ENCODE measurements at regions of chr11 and their contacts with region 1.

Region 1: GRCh38 chr11:706957-707816 is 1.2 kb downstream of the EPS8L2 start:
- DNase-seq: no peak
- H3K4me3 ChIP-seq: peak overlapping the region; percentile 38 to 64 (median 49)
- H3K27ac ChIP-seq: no peak overlapping the region
- H3K4me1 ChIP-seq: peaks cover 0 to 48% (median 33%) of the 10 kb centered on the region in 4 experiments; a peak in 6 of 7 replicates
- H3K27me3 ChIP-seq: no peaks in the 10 kb centered on the region
- CTCF ChIP-seq: no peak; a peak in 1 of 4 replicates
- EP300 ChIP-seq: no peak
- POLR2A ChIP-seq: no peak
- RAD21 ChIP-seq: no peak

Region 2: DNA sequence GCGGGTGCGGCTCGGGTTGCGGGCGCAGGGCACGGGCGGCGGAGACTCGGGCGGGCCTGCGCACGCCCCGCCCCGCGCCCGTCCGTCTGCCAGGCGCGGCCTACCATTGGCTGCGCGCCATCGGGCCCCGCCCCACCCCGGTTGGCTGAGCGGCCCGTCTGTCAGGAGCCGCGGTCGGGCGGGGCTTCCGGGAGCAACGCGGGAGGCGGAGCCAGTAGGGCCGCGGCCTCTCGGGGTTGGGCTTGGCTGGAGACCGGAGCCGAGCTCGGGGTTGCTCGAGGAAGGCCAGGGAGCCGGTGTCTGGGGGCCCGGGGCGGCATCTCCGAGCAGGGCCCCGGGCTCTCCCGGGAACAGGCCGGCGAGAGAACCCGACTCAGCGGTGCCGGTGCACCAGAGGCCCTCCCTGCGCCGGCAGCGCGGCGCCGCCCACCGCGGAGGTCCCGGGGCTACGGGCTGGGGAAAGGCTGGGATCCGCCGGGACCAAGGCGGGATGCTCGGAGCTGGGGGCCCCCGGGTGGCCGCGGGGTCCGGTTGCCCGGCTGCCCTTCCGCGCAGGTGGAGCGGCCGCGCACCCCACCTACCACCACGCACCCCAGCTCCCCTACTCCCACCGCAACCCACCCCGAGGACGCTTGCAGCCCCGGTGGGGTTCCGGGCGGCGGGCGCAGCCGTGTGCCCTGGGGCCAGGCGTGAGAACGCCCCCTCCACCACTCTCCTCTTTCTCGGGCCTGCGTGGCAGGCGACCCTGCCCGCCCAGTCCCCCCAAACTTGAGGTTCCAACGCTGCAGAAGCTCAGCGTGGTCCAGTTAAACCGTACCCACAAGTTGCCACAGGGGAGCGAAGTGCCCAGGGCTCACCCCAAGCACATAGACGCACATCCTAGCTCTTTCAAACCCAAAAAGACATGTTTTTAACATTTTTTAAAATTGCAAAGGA is 171.4 kb before region 1 on chr11 and contains the start of gene HRAS:
- CTCF ChIA-PET with region 1: no interaction called
- POLR2A ChIA-PET with region 1: no interaction called
- DNase-seq: peak; percentile 70 to 94
- H3K4me3 ChIP-seq: peak within 1 kb of the TSS; percentile 67 to 81 (median 74)
- H3K27ac ChIP-seq: 0 out of 2 replicates have a peak within 1 kb of the TSS, but pooled peaks have one; percentile 30
- H3K4me1 ChIP-seq: peaks cover 0 to 19% (median 10%) of the 10 kb centered on the region in 4 experiments; a peak in 5 of 7 replicates
- H3K27me3 ChIP-seq: peaks cover 0 to 16% (median 6%) of the 10 kb centered on the region in 4 experiments; a peak in 5 of 7 replicates
- CTCF ChIP-seq: peak in 1 of 3 experiments; percentile 20; a peak in 1 of 4 replicates
- EP300 ChIP-seq: no peak
- POLR2A ChIP-seq: peak in 1 of 2 experiments; percentile 51; a peak in 1 of 3 replicates
- RAD21 ChIP-seq: no peak
- total RNA-seq, gene HRAS: 54.7 and 60.9 TPM in 2 replicates

Region 3: DNA sequence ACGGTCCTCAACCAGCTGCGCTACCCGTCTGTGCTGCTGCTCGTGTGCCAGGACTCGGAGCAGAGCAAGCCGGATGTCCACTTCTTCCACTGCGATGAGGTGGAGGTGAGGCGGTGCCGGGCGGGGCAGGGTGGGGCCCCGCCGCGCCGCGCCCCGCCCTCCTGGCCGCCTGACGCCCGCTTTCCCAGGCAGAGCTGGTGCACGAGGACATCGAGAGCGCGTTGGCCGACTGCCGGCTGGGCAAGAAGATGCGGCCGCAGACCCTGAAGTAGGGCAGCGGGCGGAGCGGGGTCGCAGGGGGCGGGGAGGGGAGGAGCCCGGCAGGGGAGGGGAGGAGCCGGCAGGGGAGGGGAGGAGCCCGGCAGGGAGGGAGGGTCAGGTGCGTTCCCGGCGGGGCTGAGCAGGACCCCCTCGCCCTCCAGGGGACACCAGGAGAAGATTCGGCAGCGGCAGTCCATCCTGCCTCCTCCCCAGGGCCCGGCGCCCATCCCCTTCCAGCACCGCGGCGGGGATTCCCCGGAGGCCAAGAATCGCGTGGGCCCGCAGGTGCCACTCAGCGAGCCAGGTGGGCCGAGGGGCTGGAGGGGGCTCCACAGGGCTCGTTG is 13.6 kb after region 1 on chr11:
- CTCF ChIA-PET with region 1: interaction called, 22 read pairs
- POLR2A ChIA-PET with region 1: interaction called, 16 read pairs
- DNase-seq: peak in 1 of 2 experiments; percentile 86
- H3K4me3 ChIP-seq: peak overlapping the region in 3 of 4 experiments; percentile 19 to 49 (median 36); a peak in 5 of 8 replicates
- H3K27ac ChIP-seq: no peak overlapping the region
- H3K4me1 ChIP-seq: peaks cover 0 to 12% (median 7%) of the 10 kb centered on the region in 4 experiments; a peak in 5 of 7 replicates
- H3K27me3 ChIP-seq: peaks cover 0 to 8% (median 8%) of the 10 kb centered on the region in 4 experiments; a peak in 4 of 7 replicates
- CTCF ChIP-seq: peak in 1 of 3 experiments; percentile 30; a peak in 2 of 4 replicates
- EP300 ChIP-seq: 0 out of 3 replicates have a peak, but pooled peaks of 1 of the 2 experiments have one; percentile 18
- POLR2A ChIP-seq: peak in 1 of 2 experiments; percentile 55; a peak in 2 of 3 replicates
- RAD21 ChIP-seq: peak in 1 of 2 experiments; percentile 40; a peak in 1 of 4 replicates